AG04450 (cell line): ENCODE measurements at regions of chr1 and their contacts with region 1.

Region 1: DNA sequence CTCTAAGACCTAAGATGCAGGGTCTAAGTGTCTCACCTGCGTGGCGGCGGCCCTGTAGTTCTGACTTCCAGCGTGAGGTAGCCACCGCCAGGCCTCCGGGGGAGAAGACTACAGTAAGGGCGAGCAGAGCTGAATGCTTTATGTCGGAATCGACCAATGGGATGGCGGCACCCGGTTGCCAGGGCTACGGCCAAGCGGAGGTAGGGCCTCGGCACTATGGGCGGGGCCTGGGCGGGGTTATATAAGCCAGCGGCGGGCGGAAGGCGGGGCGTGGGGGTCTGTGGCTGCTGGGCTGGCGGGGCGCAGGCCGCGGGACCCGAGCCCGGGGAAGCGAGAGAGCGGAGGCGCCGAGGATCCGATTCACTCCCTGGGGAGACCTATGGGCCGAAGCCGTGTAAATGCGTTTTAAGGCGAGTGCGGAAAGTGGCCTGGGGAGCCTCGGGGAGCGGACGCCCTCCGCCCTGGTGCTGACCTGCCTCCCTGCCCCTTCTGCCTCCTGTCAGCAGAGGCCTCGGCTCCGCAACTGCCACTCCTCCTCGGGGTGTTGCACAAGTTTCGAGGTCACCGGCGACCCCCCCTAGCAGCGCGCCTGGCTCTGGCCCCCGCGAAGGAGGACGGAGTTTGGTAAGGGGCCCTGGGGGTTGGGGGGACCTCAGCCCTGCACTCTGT is at the start of gene AZIN2:
- DNase-seq: peak; percentile 86
- H3K4me3 ChIP-seq: peak within 1 kb of the TSS; percentile 95
- H3K27ac ChIP-seq: no peak within 1 kb of the TSS
- H3K27me3 ChIP-seq: no peaks in the 10 kb centered on the region
- CTCF ChIP-seq: no peak
- polyA plus RNA-seq, gene AZIN2: 7.0 and 7.8 TPM in 2 replicates

Region 2: GRCh38 chr1:32876341-32877210 is 204.4 kb before region 1 on chr1:
- CTCF ChIA-PET with region 1: interaction called, 67 read pairs
- POLR2A ChIA-PET with region 1: interaction called, 3 read pairs
- DNase-seq: no peak
- H3K4me3 ChIP-seq: no peak overlapping the region
- H3K27ac ChIP-seq: no peak overlapping the region
- H3K27me3 ChIP-seq: peaks cover 3% of the 10 kb centered on the region
- CTCF ChIP-seq: peak; percentile 78

Region 3: GRCh38 chr1:33094971-33095604 is 14.1 kb after region 1 on chr1:
- CTCF ChIA-PET with region 1: interaction called, 58 read pairs
- POLR2A ChIA-PET with region 1: interaction called, 4 read pairs
- DNase-seq: peak; percentile 29
- H3K4me3 ChIP-seq: no peak overlapping the region
- H3K27ac ChIP-seq: no peak overlapping the region
- H3K27me3 ChIP-seq: no peaks in the 10 kb centered on the region
- CTCF ChIP-seq: peak; percentile 99

Region 4: GRCh38 chr1:33188572-33189275 is 107.7 kb after region 1 on chr1:
- CTCF ChIA-PET with region 1: no interaction called
- POLR2A ChIA-PET with region 1: no interaction called
- DNase-seq: no peak
- H3K4me3 ChIP-seq: no peak overlapping the region
- H3K27ac ChIP-seq: no peak overlapping the region
- H3K27me3 ChIP-seq: peaks cover 3% of the 10 kb centered on the region
- CTCF ChIP-seq: no peak